K562 (cell line): ENCODE measurements at regions of chrX and their contacts with region 1.

Region 1: DNA sequence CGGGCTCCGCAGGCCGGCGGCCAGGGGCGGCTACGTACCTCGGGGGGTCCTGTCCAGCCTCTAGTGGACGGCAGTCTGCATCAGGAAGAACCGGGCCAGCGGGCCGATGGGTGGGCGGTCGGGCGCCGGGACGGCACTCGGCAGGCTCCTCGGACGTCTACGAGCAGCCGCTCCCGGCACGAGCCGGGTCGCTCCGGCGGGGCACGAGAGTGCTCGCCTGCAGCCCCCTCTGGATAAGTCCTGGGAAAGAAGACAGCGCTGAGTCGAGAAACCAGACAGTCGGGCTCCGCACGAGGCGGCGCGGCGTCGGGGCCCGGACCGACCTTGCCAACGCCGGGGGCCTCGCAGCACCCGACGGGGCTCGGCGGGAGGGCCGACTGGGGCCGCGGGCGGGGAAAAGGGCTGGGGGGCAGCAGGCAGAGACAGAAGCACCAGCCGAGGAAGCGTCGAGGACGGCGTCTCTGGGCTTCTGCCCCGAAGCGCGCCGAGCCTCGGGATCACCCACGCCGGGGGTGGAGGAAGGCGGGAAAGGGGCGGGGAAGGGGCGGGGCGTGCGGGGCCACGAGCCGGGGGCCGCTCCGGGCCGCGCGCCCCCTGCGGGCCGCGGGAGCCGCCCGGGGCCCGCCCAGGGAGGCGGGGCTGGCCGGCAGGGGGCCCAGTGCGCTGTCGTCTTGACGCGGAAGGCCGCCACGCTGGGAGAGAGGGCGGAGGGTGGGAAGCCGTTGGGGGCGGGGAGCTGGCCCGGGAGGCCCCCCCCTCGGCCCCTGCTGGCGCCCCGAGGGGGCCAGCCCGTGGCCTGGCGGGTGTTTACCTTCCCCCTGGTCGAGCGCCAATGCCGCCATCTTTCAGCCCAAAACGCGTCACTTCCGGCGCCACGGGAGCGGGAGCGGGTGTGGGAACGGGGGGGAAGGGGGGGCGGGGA is 1.9 kb downstream of the KLHL15 start:
- DNase-seq: peak; percentile 88 to 94 (median 90)
- ATAC-seq: peak; percentile 88
- H3K4me3 ChIP-seq: peak overlapping the region; percentile 99
- H3K27ac ChIP-seq: peak overlapping the region; percentile 100
- H3K4me1 ChIP-seq: peaks cover 9 to 10% of the 10 kb centered on the region in 2 experiments; a peak in 3 of 5 replicates
- H3K27me3 ChIP-seq: no peaks in the 10 kb centered on the region
- CTCF ChIP-seq: peak in 2 of 3 experiments; percentile 59 to 80; a peak in 4 of 6 replicates
- EP300 ChIP-seq: peak; percentile 53
- POLR2A ChIP-seq: peak; percentile 85
- RAD21 ChIP-seq: no peak; a peak in 1 of 4 replicates

Region 2: DNA sequence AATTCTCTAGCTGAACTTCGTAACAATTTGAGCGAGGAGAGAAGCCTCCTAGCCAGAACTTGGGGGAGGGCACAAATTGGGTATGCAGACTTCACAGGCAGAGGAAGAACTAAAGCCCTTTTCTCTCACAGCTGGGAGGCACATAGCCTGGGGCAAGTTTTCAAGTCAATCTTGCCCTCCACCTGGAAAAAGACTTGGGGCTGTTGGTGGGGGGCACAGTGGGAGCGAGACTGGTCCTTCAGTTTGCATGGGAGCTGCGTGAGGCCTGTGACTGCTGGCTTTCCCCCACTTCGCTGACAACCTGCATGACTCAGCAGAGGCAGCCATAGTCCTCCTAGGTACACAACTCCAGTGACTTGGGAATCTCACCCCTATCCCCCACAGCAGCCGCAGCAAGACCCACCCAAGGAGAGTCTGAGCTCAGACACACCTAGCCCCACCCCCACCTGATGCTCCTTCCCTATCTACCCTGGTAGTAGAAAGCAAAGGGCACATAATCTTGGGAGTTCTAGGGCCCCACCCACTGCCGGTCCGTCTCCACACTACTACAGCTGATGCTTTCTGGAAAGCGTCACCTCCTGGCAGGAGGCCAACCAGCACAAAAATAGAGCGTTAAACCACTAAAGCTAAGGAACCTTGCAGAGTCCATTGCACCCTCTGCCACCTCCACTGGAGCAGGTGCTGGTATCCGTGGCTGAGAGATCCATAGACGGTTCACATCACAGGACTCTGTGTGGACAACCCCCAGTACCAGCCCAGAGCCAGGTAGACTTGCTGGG is 1591.6 kb before region 1 on chrX:
- CTCF ChIA-PET with region 1: no interaction called
- POLR2A ChIA-PET with region 1: no interaction called
- in situ Hi-C with region 1: no loop called
- intact Hi-C with region 1: no loop called
- DNase-seq: no peak
- ATAC-seq: no peak
- H3K4me3 ChIP-seq: no peak overlapping the region
- H3K27ac ChIP-seq: no peak overlapping the region
- H3K4me1 ChIP-seq: no peaks in the 10 kb centered on the region
- H3K27me3 ChIP-seq: no peaks in the 10 kb centered on the region
- CTCF ChIP-seq: no peak
- EP300 ChIP-seq: no peak
- POLR2A ChIP-seq: no peak
- RAD21 ChIP-seq: no peak

Region 3: DNA sequence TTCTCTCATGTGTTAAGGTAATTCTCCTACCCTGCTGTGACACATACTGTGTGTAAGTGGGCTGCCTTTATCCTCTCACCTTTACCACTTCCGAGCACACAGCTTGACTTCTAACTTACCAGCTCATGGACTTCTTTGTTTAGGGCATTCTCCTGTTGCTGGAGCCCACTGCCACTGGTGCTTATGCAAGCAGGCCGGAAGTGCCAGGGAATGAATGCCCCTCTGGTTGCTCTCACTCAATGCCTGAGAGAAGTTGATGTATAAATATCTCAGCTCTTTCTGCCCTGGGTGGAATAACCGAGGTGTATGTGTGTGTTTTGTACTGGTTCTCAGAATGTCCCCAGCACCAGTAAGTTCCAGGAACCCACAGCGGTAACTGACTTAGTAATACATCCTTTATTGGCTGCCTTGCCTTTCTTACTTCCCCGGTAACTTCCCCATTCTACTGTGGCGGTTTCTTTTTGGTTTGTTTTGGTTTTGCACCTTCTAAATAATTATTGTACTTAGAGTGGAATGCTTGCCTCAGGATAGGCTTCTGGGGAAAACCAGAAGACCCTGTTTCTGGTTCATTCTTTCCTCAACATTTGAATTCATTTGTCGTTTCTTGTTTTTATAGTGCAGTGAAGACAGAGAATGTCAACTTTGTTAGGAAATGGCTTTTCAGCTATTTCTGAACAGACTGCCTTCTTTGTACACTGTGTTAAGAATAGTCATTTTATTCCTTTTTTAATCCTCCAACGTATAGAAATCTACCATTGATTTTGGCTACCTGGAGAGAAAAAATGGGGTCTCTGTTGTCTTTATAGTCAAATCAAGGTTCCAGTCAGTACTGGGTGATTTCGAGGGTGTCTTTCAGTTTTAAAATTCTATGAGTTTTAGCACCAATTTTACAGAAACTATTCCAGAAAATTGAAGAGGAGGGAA is 71.8 kb before region 1 on chrX:
- CTCF ChIA-PET with region 1: no interaction called
- POLR2A ChIA-PET with region 1: no interaction called
- in situ Hi-C with region 1: no loop called
- intact Hi-C with region 1: loop called (anchors 1 kb)
- DNase-seq: peak; percentile 10 to 73 (median 44)
- ATAC-seq: peak; percentile 83
- H3K4me3 ChIP-seq: peak overlapping the region; percentile 39
- H3K27ac ChIP-seq: peak overlapping the region; percentile 86
- H3K4me1 ChIP-seq: peaks cover 3% of the 10 kb centered on the region in 2 experiments; a peak in 2 of 5 replicates
- H3K27me3 ChIP-seq: no peaks in the 10 kb centered on the region
- CTCF ChIP-seq: no peak
- EP300 ChIP-seq: peak; percentile 55; the same call in 1 of the 2 replicates
- POLR2A ChIP-seq: peak; percentile 64
- RAD21 ChIP-seq: no peak

Region 4: DNA sequence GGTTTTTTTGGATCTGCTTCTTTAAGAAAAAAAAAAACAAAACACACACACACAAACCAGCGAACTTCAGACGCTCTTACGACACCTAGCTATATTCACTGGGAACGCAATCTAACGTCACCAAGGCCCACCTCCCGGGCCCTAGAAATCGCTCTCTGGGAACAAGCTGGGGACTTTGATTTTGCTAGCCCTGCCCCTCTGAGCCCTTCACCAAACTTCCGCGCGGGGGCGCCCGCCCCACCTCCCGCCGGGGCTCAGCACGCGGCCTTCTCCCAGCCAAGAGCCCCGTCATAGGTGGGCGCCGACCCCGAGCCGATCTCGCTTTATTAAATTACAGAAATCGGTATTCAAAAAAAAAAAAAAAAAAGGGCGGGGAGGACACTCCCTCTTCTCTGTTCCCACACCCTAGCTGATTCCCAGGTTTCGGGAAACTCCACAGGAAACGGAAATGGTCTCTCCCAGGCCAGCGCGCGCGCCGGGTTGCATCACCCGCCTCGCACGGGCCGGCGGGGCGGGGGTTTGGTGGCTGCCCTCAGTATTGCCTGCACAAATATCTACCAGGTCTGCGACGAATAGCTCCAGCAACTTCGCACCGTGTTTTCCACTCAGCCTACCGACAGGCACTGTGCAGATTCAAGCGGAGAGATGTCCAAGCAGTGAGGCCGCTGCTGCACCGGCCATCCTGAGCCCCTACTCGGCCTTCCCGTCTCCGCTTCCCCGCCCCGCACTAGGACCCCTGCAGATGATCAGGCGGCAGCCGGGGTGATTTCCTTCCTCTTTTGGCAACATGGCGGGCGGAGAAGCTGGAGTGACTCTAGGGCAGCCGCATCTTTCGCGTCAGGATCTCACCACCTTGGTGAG is 29.3 kb after region 1 on chrX and contains the start of gene EIF2S3:
- CTCF ChIA-PET with region 1: interaction called, 4 read pairs
- POLR2A ChIA-PET with region 1: interaction called, 17 read pairs
- in situ Hi-C with region 1: no loop called
- intact Hi-C with region 1: loop called (anchors 1 kb)
- DNase-seq: peak; percentile 79 to 95 (median 82)
- ATAC-seq: peak; percentile 95
- H3K4me3 ChIP-seq: no peak within 1 kb of the TSS
- H3K27ac ChIP-seq: no peak within 1 kb of the TSS; the same call in 1 of the 3 replicates
- H3K4me1 ChIP-seq: peaks cover 4 to 6% of the 10 kb centered on the region in 2 experiments; a peak in 2 of 5 replicates
- H3K27me3 ChIP-seq: no peaks in the 10 kb centered on the region
- CTCF ChIP-seq: peak; percentile 87 to 88 (median 88)
- EP300 ChIP-seq: peak; percentile 20; the same call in 1 of the 2 replicates
- POLR2A ChIP-seq: peak; percentile 94
- RAD21 ChIP-seq: peak; percentile 51 to 63
- polyA plus RNA-seq, gene EIF2S3: 148 to 192 TPM

Region 5: GRCh38 chrX:24479924-24480323 is 454.8 kb after region 1 on chrX:
- CTCF ChIA-PET with region 1: no interaction called
- POLR2A ChIA-PET with region 1: no interaction called
- in situ Hi-C with region 1: no loop called
- intact Hi-C with region 1: no loop called
- DNase-seq: no peak
- ATAC-seq: no peak
- H3K4me3 ChIP-seq: no peak overlapping the region
- H3K27ac ChIP-seq: no peak overlapping the region
- H3K4me1 ChIP-seq: no peaks in the 10 kb centered on the region
- H3K27me3 ChIP-seq: peaks cover 0 to 5% of the 10 kb centered on the region in 2 experiments; a peak in 2 of 5 replicates
- CTCF ChIP-seq: no peak
- EP300 ChIP-seq: no peak
- POLR2A ChIP-seq: no peak
- RAD21 ChIP-seq: no peak